Activated T-helper 1 cell treated with anti-CD3 and anti-CD28 coated beads, Interleukin-12 subunit alpha, Interleukin-12 subunit beta, Interleukin-2, Interleukin-4 antibody, amounts not matched to agents 30 ng/mL and 10 ng/mL and 1 ng/mL, durations not matched to agents 14 hours and 24 hours and 36 hours (primary cell): ENCODE measurements at regions of chr7 and their contacts with region 1.

Region 1: DNA sequence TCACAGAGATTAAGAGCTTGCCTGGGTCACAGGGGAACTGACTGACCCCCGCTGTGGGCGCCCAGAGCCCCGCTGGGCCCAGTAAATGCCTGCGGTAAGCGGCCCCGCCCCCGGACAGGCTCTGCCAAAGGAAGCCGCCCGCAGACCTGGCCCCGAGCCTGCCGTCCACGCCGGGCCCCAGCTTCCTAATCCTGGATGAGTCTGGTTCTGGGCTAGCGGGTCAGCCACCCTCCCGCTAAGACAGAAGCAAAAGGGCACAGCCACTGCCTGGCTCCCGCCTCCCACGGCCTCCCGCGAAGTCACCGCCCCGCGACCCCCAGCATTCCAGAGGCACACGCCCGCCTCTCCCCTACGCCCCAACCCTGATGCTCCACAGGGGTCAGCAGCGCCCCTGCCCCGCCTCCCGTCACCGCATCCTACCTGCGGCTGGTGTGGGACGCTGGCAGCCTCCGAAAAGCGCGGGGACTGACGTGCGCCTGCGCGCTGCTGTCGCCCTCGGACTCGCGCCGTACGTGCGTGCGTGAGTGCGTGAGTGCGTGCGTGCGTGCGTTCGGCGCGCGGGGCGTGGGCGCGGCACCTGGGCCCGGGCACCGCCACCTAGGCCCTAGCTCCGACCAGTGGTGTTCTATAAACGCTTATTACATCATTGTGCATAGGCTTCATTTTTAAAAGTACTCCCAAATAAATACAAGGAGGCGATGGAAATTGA is at the start of gene FIGNL1:
- DNase-seq: peak; percentile 81
- H3K4me3 Mint-ChIP-seq: peak within 1 kb of the TSS; percentile 92
- H3K27ac Mint-ChIP-seq: peak within 1 kb of the TSS; percentile 90
- H3K4me1 Mint-ChIP-seq: peaks cover 42% of the 10 kb centered on the region
- H3K27me3 Mint-ChIP-seq: peaks cover 15% of the 10 kb centered on the region
- total RNA-seq, gene FIGNL1: 41.6 and 45.4 TPM in 2 replicates

Region 2: GRCh38 chr7:50206453-50207250 is 243.4 kb before region 1 on chr7:
- intact Hi-C with region 1: loop called (anchors 2 kb)
- DNase-seq: peak; percentile 65
- H3K4me3 Mint-ChIP-seq: peak overlapping the region; percentile 68
- H3K27ac Mint-ChIP-seq: peak overlapping the region; percentile 93
- H3K4me1 Mint-ChIP-seq: peaks cover 98% of the 10 kb centered on the region
- H3K27me3 Mint-ChIP-seq: no peaks in the 10 kb centered on the region

Region 3: DNA sequence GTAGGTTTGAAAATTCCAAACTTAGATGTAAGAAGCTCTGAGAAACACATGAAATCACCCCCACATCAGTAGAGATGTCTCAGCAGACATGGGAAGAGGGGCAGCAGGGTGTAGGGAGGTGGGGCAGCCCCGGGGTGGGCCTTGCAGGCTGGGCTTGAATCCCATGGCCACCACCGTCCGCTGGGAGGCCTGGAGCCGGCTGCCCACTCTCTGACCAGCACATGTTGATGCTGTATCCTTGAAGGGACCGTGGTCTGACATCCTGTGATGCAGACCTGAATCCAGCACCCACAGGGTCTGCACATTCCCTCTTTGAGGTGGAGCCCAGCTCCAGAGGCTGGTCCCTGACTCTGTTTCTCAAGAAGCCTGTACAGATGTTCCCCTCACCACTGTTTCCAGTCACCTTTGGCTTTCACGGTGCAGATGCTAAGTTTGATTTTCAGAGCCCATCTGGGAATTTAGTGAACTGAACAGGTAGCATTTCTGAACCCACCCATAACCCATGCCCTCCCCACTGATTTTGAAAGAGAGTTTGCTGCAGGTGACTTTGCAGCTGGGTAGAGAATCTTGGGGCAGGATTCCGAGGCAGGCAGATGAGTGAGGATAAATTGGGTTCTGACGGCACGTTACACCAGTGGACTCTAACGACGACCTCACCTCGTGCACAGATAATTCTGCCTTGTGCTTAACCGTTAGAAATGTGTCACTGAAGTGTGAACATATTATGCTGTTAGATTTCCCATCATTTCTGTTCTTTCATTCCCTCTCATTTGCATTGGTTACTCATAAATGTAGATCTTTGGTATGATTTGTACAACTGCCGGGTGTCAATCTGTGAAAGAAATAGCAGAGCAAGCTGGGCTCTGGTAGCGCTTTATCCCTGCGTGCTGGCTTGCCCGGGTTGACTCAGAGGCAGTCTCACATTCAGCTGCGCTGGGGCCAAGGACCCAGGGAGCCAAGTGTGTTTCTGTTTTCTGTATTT is 99.8 kb before region 1 on chr7:
- intact Hi-C with region 1: loop called (anchors 1 kb)
- DNase-seq: peak; percentile 77
- H3K4me3 Mint-ChIP-seq: peak overlapping the region; percentile 53
- H3K27ac Mint-ChIP-seq: peak overlapping the region; percentile 93
- H3K4me1 Mint-ChIP-seq: peaks cover 97% of the 10 kb centered on the region
- H3K27me3 Mint-ChIP-seq: no peaks in the 10 kb centered on the region

Region 4: DNA sequence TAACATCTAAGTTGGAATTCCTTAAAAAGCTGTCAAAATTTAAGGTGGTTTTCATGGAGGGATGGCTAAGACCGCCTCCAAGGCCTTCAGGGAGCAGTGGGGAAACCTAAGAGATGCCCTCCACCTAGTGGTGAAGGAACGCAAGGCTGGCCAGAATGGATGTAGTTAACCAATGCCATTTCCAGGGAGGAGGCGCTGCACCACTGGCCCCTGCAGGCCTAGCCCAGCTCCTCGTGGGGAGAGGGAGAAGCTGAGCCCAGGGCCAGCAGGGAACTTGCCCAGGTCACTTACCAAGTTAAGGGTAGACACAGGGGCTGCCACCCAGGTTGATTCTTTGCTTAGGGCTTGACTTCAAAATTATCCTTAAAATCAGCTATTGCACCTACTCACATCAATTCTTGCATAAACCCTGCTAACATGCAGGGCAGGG is 31.9 kb before region 1 on chr7:
- intact Hi-C with region 1: loop called (anchors 1 kb)
- DNase-seq: peak; percentile 64
- H3K4me3 Mint-ChIP-seq: no peak overlapping the region
- H3K27ac Mint-ChIP-seq: no peak overlapping the region
- H3K4me1 Mint-ChIP-seq: peaks cover 32% of the 10 kb centered on the region
- H3K27me3 Mint-ChIP-seq: no peaks in the 10 kb centered on the region

Region 5: DNA sequence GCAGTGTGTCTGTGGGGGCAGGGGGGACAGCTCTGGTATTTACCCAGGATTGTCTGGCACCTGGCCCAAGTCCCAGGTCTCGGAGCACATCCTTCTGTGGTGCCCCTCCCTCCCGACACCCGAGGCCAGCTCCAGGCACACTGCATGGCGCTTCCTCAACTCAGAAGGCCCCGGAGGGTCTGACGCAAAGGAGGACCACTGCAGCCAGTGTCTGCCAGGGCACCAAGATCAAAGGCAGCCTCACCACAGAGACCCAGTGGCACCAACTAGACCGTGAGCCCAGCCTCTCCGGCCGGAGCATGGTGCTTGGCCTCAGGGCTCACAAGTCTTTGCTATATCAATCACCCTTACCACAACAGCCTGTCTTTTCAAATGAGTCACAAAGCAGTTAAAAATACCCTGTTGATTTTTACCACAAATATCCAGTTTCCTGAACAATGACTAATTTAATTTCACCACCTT is 214.5 kb after region 1 on chr7:
- intact Hi-C with region 1: loop called (anchors 2 kb)
- DNase-seq: no peak
- H3K4me3 Mint-ChIP-seq: no peak overlapping the region
- H3K27ac Mint-ChIP-seq: no peak overlapping the region
- H3K4me1 Mint-ChIP-seq: peaks cover 58% of the 10 kb centered on the region
- H3K27me3 Mint-ChIP-seq: peaks cover 3% of the 10 kb centered on the region

Region 6: GRCh38 chr7:51123322-51124029 is 673.4 kb after region 1 on chr7:
- intact Hi-C with region 1: loop called (anchors 1 kb)
- DNase-seq: peak; percentile 52
- H3K4me3 Mint-ChIP-seq: no peak overlapping the region
- H3K27ac Mint-ChIP-seq: peak overlapping the region; percentile 84
- H3K4me1 Mint-ChIP-seq: peaks cover 31% of the 10 kb centered on the region
- H3K27me3 Mint-ChIP-seq: no peaks in the 10 kb centered on the region